GM12878 (cell line): ENCODE measurements at regions of chr2 and their contacts with region 1.

Region 1: GRCh38 chr2:240566203-240567136 is 1.8 kb upstream of the RNPEPL1 start:
- DNase-seq: peak; percentile 57
- ATAC-seq: peak; percentile 80
- H3K4me3 ChIP-seq: peak overlapping the region; percentile 77
- H3K27ac ChIP-seq: peak overlapping the region; percentile 97
- H3K4me1 ChIP-seq: peaks cover 51% of the 10 kb centered on the region
- H3K27me3 ChIP-seq: no peaks in the 10 kb centered on the region
- CTCF ChIP-seq: peak; percentile 57 to 85 (median 57)
- EP300 ChIP-seq: no peak
- POLR2A ChIP-seq: no peak
- RAD21 ChIP-seq: peak; percentile 22; the same call in 1 of the 2 replicates

Region 2: DNA sequence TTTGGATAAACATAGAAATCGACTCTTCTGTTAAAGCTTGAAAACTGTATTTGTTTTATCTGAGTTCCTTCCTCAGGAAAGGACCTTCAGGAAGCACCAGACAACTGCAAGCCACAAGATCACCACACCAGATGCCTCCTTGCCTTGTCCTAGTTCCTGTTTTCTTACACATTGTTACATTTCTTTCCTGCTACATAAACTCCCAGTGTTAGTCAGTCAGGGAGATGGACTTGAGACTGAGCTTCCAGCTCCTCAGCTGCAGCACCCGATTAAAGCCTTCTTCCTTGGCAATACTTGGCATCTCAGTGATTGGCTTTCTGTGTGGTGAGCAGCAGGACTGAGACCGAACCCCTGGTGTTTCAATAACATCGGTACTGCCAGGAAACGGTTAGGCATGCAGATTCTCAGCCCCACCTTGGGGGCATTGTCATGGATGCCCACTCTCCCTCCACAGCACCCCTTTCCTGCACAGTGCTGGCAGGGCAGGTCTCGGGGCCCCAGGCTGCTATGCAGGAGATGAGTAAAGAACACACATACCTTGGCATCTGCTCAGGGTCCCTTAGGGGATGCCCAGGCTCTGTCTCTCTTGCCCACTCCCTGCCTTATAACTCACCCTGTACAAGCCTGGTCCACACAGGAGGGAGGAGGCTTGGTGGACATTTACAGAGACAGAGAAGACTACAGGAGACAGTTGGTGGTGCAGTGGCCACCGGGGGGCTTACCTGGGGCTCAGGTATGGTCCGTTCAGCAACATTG is 41.3 kb before region 1 on chr2:
- CTCF ChIA-PET with region 1: no interaction called
- POLR2A ChIA-PET with region 1: no interaction called
- RAD21 ChIA-PET with region 1: no interaction called
- SMC1A ChIA-PET with region 1: no interaction called
- in situ Hi-C with region 1: no loop called
- intact Hi-C with region 1: no loop called
- DNase-seq: no peak
- ATAC-seq: no peak
- H3K4me3 ChIP-seq: no peak overlapping the region
- H3K27ac ChIP-seq: no peak overlapping the region
- H3K4me1 ChIP-seq: no peaks in the 10 kb centered on the region
- H3K27me3 ChIP-seq: no peaks in the 10 kb centered on the region
- CTCF ChIP-seq: no peak
- EP300 ChIP-seq: no peak
- POLR2A ChIP-seq: no peak
- RAD21 ChIP-seq: no peak

Region 3: GRCh38 chr2:240579771-240580614 is 13.5 kb after region 1 on chr2:
- CTCF ChIA-PET with region 1: interaction called, 196 read pairs
- POLR2A ChIA-PET with region 1: interaction called, 233 read pairs
- RAD21 ChIA-PET with region 1: interaction called, 206 read pairs
- SMC1A ChIA-PET with region 1: interaction called, 124 read pairs
- in situ Hi-C with region 1: no loop called
- intact Hi-C with region 1: loop called (anchors 1 kb)
- DNase-seq: peak; percentile 62
- ATAC-seq: peak; percentile 72
- H3K4me3 ChIP-seq: no peak overlapping the region
- H3K27ac ChIP-seq: peak overlapping the region; percentile 62
- H3K4me1 ChIP-seq: peaks cover 43% of the 10 kb centered on the region
- H3K27me3 ChIP-seq: no peaks in the 10 kb centered on the region
- CTCF ChIP-seq: peak; percentile 71 to 77 (median 77)
- EP300 ChIP-seq: peak in 1 of 2 experiments; percentile 68; a peak in 2 of 4 replicates
- POLR2A ChIP-seq: peak; percentile 53; the same call in 1 of the 2 replicates
- RAD21 ChIP-seq: peak; percentile 51

Region 4: DNA sequence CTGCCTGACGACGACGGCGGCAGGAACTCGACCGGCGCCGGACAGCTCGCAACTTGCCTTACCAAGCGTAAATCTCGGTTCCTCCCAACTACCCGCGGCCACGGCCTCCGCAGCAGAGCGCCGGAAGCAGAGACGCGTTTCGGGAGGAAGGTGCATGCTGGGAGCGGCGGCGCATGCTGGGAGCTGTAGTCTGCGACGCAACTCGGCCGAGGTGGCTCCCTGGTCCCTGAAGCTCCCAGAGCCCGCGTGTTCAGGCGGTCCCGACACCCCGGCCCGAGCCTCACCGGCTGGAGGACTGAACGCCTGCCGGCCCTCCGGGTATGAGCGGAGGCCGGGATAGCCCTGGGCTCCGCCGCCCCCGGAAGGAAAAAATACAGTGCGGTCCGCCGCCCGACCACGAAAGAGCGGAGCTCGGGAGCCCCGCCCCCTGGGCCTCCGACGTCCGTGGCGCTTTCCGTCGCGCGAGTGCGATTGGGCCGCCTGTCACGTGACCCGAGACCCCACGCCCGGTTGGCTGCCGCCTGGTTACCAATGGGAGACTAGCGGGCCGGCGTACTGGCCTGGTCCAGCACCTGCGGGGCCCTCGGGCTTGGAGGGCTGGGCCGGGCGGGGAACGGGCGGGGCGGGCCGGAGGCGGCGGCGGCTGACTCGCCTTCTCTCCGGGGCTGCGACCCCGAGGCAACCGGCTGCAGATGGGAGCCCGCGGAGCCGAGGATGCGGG is 19.9 kb after region 1 on chr2 and contains the start of gene CAPN10:
- CTCF ChIA-PET with region 1: interaction called, 196 read pairs
- POLR2A ChIA-PET with region 1: interaction called, 233 read pairs
- RAD21 ChIA-PET with region 1: interaction called, 206 read pairs
- SMC1A ChIA-PET with region 1: interaction called, 124 read pairs
- in situ Hi-C with region 1: no loop called
- intact Hi-C with region 1: loop called (anchors 1 kb)
- DNase-seq: peak; percentile 73
- ATAC-seq: peak; percentile 79
- H3K4me3 ChIP-seq: peak within 1 kb of the TSS; percentile 95
- H3K27ac ChIP-seq: peak within 1 kb of the TSS; percentile 92
- H3K4me1 ChIP-seq: peaks cover 34% of the 10 kb centered on the region
- H3K27me3 ChIP-seq: no peaks in the 10 kb centered on the region
- CTCF ChIP-seq: no peak
- EP300 ChIP-seq: no peak
- POLR2A ChIP-seq: peak; percentile 95
- RAD21 ChIP-seq: no peak
- polyA plus RNA-seq, gene CAPN10: 0.37 to 1.6 TPM

Region 5: GRCh38 chr2:240622531-240623235 is 56.2 kb after region 1 on chr2:
- CTCF ChIA-PET with region 1: interaction called, 12 read pairs
- POLR2A ChIA-PET with region 1: interaction called, 5 read pairs
- RAD21 ChIA-PET with region 1: interaction called, 5 read pairs
- SMC1A ChIA-PET with region 1: interaction called, 4 read pairs
- in situ Hi-C with region 1: no loop called
- intact Hi-C with region 1: loop called (anchors 2 kb)
- DNase-seq: no peak
- ATAC-seq: no peak
- H3K4me3 ChIP-seq: no peak overlapping the region
- H3K27ac ChIP-seq: no peak overlapping the region
- H3K4me1 ChIP-seq: peaks cover 49% of the 10 kb centered on the region
- H3K27me3 ChIP-seq: no peaks in the 10 kb centered on the region
- CTCF ChIP-seq: no peak
- EP300 ChIP-seq: no peak
- POLR2A ChIP-seq: no peak
- RAD21 ChIP-seq: no peak